ENCODE measurements at regions of chr20 and their contacts with region 1.

Region 1: DNA sequence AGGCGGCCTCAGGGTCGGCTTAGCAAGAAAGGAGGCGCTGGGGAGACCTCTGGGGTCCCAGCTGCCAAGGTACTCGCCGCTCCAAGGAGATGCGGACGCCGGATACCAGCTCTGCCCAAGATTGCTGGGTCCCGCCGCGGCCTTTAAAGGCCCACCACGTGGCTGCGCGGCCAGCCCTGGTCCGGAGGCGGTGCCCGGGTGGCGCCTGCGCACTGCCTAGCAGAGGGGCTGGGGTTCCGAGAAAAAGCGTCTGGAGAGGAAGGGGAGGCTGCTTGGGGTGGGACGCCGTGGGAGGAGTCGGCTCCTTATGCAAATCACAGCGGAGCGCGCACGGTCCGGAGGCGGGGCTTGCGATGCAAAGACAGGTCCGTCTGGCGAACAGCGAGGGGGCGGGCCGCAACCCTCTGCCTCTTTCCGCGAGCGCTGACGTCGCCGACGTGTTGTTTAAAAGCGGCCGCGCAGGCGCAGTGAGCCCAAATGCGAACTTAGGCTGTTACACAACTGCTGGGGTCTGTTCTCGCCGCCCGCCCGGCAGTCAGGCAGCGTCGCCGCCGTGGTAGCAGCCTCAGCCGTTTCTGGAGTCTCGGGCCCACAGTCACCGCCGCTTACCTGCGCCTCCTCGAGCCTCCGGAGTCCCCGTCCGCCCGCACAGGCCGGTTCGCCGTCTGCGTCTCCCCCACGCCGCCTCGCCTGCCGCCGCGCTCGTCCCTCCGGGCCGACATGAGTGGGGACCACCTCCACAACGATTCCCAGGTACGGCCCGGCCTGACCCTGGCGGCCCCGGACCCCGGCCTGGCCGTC is at the start of gene TOP1:
- DNase-seq: peak; percentile 99
- H3K4me3 Mint-ChIP-seq: peak within 1 kb of the TSS; percentile 94
- H3K27ac Mint-ChIP-seq: peak within 1 kb of the TSS; percentile 94
- H3K4me1 Mint-ChIP-seq: peaks cover 49% of the 10 kb centered on the region
- H3K27me3 Mint-ChIP-seq: no peaks in the 10 kb centered on the region
- total RNA-seq, gene TOP1: 120 and 123 TPM in 2 replicates

Region 2: DNA sequence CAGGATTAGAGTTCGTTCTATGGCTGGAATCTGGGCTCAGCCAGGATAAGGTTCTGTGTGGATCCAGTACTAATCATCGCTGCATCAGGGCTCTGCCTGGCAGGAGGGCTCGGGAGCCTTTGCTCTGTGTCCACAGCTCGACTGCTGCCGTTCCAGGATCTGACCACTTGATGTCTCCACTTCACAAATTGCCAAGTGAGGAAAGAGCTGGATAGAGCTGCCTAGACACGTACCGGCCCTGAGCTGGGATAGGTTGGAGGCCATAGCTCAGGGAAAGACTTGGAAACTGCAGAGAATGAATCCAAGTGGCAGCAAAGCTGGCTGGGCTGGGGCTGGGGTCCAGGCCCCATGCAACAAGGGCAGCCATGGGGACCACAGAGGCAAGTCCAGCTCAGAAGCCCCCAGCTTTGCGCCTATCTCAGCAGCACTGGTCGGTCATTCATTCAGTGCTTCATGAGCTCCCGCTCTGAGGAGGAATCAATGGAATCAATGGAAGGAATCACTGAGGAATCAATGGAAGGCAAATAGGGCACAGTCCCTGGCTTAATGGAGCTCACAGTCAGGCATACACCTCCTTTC is 37.9 kb before region 1 on chr20:
- intact Hi-C with region 1: loop called (anchors 1 kb)
- DNase-seq: peak; percentile 57
- H3K4me3 Mint-ChIP-seq: no peak overlapping the region
- H3K27ac Mint-ChIP-seq: peak overlapping the region; percentile 71
- H3K4me1 Mint-ChIP-seq: peaks cover 44% of the 10 kb centered on the region
- H3K27me3 Mint-ChIP-seq: no peaks in the 10 kb centered on the region

Region 3: GRCh38 chr20:41038878-41039404 is 10.4 kb after region 1 on chr20:
- intact Hi-C with region 1: loop called (anchors 1 kb)
- DNase-seq: no peak
- H3K4me3 Mint-ChIP-seq: no peak overlapping the region
- H3K27ac Mint-ChIP-seq: no peak overlapping the region
- H3K4me1 Mint-ChIP-seq: peaks cover 89% of the 10 kb centered on the region
- H3K27me3 Mint-ChIP-seq: no peaks in the 10 kb centered on the region

Region 4: GRCh38 chr20:41078329-41078728 is 49.8 kb after region 1 on chr20:
- intact Hi-C with region 1: loop called (anchors 1 kb)
- DNase-seq: no peak
- H3K4me3 Mint-ChIP-seq: peak overlapping the region; percentile 3
- H3K27ac Mint-ChIP-seq: peak overlapping the region; percentile 9
- H3K4me1 Mint-ChIP-seq: peaks cover 83% of the 10 kb centered on the region
- H3K27me3 Mint-ChIP-seq: no peaks in the 10 kb centered on the region

Region 5: DNA sequence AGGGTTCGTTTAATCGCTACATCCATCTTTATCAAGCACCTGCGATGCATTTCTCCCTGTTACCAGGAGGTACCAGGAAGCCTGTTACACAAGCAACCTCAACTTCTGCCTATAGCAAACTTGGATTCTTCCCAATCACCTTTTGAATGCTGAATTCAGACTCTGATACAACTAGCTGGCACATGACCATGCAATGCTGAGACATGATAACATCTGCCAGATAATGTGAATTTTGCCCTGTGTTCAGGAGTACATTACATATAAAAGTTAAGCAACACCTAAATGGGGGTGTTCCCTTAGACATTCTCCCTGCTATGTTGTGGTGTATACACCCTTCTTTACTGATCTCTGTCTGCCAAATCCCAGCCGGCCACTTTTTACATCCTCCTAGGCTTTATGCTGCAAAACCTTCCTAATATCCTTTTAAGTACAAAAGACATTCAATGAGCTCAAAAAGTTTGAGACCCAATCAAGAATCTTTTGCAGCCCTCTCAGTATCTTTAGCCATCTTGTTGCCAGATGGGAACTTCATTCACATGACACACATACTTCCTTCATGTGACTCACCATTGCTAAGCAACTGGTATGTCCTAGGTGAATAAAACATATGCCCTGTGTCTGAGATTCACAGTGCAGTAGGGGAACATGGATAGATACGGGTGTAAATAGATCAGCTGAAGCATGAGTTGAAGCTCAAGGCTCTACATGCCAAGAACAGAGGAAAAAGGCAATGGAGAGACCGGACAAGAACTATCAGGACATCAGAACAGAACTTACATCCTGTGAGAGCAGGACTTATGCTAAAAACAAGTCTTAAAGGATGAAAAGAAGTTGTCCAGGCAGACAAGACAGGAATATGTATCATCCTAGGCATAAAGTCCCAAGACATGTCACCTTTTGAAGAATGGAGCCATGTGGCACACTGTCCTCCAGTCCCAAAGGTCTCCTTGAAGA is 204.7 kb after region 1 on chr20:
- intact Hi-C with region 1: loop called (anchors 1 kb)
- DNase-seq: no peak
- H3K4me3 Mint-ChIP-seq: no peak overlapping the region
- H3K27ac Mint-ChIP-seq: no peak overlapping the region
- H3K4me1 Mint-ChIP-seq: peaks cover 30% of the 10 kb centered on the region
- H3K27me3 Mint-ChIP-seq: no peaks in the 10 kb centered on the region

Region 6: DNA sequence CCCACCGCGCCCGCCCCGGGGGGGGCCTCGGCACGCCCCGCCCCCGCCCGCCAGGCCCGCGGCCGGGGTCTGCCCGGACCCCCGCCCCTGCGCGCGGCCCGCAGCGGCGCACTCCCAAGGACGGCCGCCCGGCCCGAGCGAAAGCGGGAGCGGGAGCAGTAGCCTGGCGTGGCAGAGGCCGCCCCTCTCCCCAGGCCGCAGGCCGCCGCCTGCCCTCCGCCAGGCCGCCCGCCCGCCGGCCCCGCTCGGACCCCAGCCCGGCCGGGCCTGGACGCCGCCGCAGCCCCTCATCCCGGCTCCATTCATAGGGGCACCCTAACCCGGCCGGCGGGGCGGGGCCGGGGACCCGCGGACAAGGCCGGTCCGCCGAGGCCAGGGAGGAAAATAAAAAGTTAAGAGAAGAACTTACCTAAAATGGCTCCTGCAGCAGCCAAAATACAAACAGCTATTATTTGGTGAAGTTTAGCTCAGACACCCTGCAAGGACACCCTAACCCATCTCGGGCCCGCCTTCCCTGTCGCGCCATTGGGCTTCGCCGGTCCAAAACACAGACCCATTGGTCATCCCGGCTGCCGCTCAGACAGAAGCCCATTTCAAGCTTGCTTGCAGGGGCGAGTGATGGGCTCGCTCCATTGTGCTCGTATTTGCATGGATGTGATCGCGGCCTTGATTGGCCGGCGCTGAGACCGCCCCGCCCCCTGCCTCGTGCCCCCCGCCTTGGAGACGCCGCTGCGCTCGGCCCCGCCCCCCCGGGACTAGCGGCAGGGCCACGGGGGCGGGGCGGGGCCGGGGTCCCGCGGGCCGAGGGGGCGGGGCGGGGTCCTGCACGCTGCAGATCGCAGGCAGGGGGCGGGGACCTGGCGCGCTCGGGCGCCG is 589.6 kb after region 1 on chr20 and contains the start of gene CHD6:
- intact Hi-C with region 1: loop called (anchors 1 kb)
- DNase-seq: peak; percentile 99
- H3K4me3 Mint-ChIP-seq: peak within 1 kb of the TSS; percentile 94
- H3K27ac Mint-ChIP-seq: peak within 1 kb of the TSS; percentile 89
- H3K4me1 Mint-ChIP-seq: peaks cover 40% of the 10 kb centered on the region
- H3K27me3 Mint-ChIP-seq: peaks cover 16% of the 10 kb centered on the region
- total RNA-seq, gene CHD6: 34.3 and 36.8 TPM in 2 replicates